Activated T-helper 1 cell treated with anti-CD3 and anti-CD28 coated beads, Interleukin-12 subunit alpha, Interleukin-12 subunit beta, Interleukin-2, Interleukin-4 antibody, amounts not matched to agents 30 ng/mL and 10 ng/mL and 1 ng/mL, durations not matched to agents 14 hours and 24 hours and 36 hours (primary cell): ENCODE measurements at regions of chrX and their contacts with region 1.

Region 1: DNA sequence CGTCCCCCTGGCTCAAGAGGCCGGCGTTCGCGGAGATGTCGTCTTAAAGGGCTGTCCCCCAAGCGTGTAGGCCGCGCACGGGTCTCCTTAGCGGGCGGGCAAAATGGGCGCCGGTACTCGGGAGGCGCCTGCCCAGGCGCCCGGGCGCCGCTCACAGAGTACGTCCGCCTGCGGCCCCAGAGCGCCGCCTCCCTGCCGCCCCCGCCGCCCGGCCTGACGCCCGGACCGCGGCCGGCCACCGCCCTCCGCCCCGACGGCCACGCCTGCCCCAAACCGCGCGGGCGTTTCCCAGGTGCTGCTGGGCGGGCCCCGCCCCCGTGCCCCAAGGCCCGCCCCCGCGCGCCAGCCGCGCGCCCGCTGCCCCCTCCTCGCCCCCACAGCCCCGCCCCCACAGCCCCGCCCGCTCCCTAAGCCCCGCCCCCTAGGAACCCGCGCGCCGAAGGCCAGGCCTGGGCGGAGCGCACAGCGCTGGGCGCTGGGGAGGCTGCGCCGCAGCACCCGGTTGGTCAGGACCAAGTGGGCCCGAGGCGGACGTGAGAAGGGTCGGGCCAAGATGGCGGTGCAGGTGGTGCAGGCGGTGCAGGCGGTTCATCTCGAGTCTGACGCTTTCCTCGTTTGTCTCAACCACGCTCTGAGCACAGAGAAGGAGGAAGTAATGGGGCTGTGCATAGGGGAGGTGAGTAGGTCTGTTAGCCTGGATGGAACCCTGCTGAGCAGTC is at the starts of genes BRCC3, CMC4 and MTCP1:
- DNase-seq: peak; percentile 72
- H3K4me3 Mint-ChIP-seq: peak within 1 kb of the TSS; percentile 95
- H3K27ac Mint-ChIP-seq: peak within 1 kb of the TSS; percentile 93
- H3K4me1 Mint-ChIP-seq: peaks cover 50% of the 10 kb centered on the region
- H3K27me3 Mint-ChIP-seq: no peaks in the 10 kb centered on the region
- total RNA-seq, gene BRCC3: 28.9 and 30.5 TPM in 2 replicates
- total RNA-seq, gene CMC4: 1.3 and 3.0 TPM in 2 replicates
- total RNA-seq, gene MTCP1: 9.1 and 12.7 TPM in 2 replicates

Region 2: DNA sequence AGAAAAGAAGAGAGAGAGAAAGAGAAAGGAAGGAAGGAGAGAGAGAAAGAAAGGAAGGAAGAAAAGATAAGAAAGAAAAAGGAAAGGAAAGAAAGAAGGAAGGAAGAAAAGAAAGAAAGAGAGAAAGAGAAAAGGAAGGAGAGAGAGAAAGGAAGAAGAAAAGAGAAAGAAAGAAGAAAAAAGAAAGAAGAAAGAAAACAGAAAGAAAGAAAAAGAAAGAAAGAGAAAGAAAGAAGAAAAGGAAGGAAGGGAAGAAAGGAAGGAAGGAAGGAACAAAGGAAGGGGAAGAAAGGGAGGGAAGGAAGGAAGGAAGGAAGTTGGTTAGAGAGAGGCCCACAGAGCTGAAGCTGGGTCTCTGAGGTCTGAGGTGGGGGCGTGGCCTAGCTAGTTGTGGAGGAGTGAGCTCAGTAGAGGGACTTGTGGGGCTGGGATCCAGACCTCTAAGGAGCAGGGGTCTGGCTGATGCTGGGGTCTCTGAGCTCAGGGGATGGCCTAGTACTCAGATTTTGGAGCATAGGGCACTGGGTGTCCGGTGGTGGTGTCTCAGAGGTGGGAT is 1213.7 kb before region 1 on chrX:
- intact Hi-C with region 1: no loop called
- DNase-seq: no peak
- H3K4me3 Mint-ChIP-seq: no peak overlapping the region
- H3K27ac Mint-ChIP-seq: no peak overlapping the region
- H3K4me1 Mint-ChIP-seq: no peaks in the 10 kb centered on the region
- H3K27me3 Mint-ChIP-seq: peaks cover 10% of the 10 kb centered on the region

Region 3: GRCh38 chrX:154873329-154873728 is 197.8 kb before region 1 on chrX:
- intact Hi-C with region 1: no loop called
- DNase-seq: no peak
- H3K4me3 Mint-ChIP-seq: no peak overlapping the region
- H3K27ac Mint-ChIP-seq: no peak overlapping the region
- H3K4me1 Mint-ChIP-seq: no peaks in the 10 kb centered on the region
- H3K27me3 Mint-ChIP-seq: no peaks in the 10 kb centered on the region

Region 4: DNA sequence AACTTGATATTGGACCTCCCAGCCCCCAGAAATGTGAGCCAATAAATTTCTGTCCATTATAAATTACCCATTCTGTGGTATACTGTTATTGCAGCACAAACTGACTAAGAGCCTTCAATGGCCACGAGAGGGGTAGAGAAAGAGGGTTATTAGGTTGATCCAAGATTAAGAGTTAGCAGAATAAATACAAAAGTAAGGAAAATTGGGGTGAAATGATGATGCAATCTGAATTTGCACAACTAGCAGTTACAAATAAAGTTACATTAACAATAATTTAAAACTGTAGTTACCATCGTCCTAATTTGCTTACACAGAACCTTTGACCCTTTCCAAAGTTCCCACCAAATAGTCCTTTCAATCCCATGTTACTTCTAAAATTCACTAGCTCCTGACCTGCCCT is 102.8 kb before region 1 on chrX:
- intact Hi-C with region 1: no loop called
- DNase-seq: no peak
- H3K4me3 Mint-ChIP-seq: no peak overlapping the region
- H3K27ac Mint-ChIP-seq: no peak overlapping the region
- H3K4me1 Mint-ChIP-seq: no peaks in the 10 kb centered on the region
- H3K27me3 Mint-ChIP-seq: peaks cover 4% of the 10 kb centered on the region

Region 5: GRCh38 chrX:154990496-154990895 is 80.6 kb before region 1 on chrX:
- intact Hi-C with region 1: loop called (anchors 2 kb)
- DNase-seq: no peak
- H3K4me3 Mint-ChIP-seq: no peak overlapping the region
- H3K27ac Mint-ChIP-seq: no peak overlapping the region
- H3K4me1 Mint-ChIP-seq: peaks cover 18% of the 10 kb centered on the region
- H3K27me3 Mint-ChIP-seq: peaks cover 2% of the 10 kb centered on the region

Region 6: GRCh38 chrX:155056877-155057792 is 14.0 kb before region 1 on chrX:
- intact Hi-C with region 1: loop called (anchors 1 kb)
- DNase-seq: peak; percentile 22
- H3K4me3 Mint-ChIP-seq: peak overlapping the region; percentile 62
- H3K27ac Mint-ChIP-seq: no peak overlapping the region
- H3K4me1 Mint-ChIP-seq: peaks cover 35% of the 10 kb centered on the region
- H3K27me3 Mint-ChIP-seq: no peaks in the 10 kb centered on the region